A549 (cell line): ENCODE measurements at regions of chr5 and their contacts with region 1.

Region 1: GRCh38 chr5:81794226-81794625 is 43.3 kb upstream of the SSBP2 start:
- DNase-seq: no peak
- ATAC-seq: no peak
- H3K4me3 ChIP-seq: no peak overlapping the region
- H3K27ac ChIP-seq: no peak overlapping the region
- H3K4me1 ChIP-seq: no peaks in the 10 kb centered on the region
- CTCF ChIP-seq: no peak
- EP300 ChIP-seq: no peak
- POLR2A ChIP-seq: no peak
- RAD21 ChIP-seq: no peak

Region 2: GRCh38 chr5:81779125-81779915 is 14.9 kb before region 1 on chr5:
- CTCF ChIA-PET with region 1: interaction called, 11 read pairs
- POLR2A ChIA-PET with region 1: no interaction called
- DNase-seq: no peak
- ATAC-seq: no peak; a peak in 2 of 6 replicates
- H3K4me3 ChIP-seq: no peak overlapping the region
- H3K27ac ChIP-seq: peak overlapping the region in 1 of 2 experiments; percentile 49; a peak in 2 of 6 replicates
- H3K4me1 ChIP-seq: peaks cover 6% of the 10 kb centered on the region; the same call in 1 of the 3 replicates
- CTCF ChIP-seq: no peak
- EP300 ChIP-seq: no peak
- POLR2A ChIP-seq: no peak
- RAD21 ChIP-seq: no peak